ENCODE measurements at regions of chr2 and their contacts with region 1.

Region 1: GRCh38 chr2:17719562-17720371 is 33.8 kb downstream of the SMC6 start:
- DNase-seq: no peak
- ATAC-seq: peak; percentile 59
- H3K4me3 ChIP-seq: no peak overlapping the region
- H3K27ac ChIP-seq: no peak overlapping the region
- H3K4me1 ChIP-seq: no peaks in the 10 kb centered on the region
- H3K27me3 ChIP-seq: no peaks in the 10 kb centered on the region
- CTCF ChIP-seq: peak; percentile 65
- EP300 ChIP-seq: no peak
- POLR2A ChIP-seq: no peak
- RAD21 ChIP-seq: no peak

Region 2: GRCh38 chr2:17753803-17754663 is 34.3 kb after region 1 on chr2 and contains the starts of genes GEN1 and SMC6:
- CTCF ChIA-PET with region 1: no interaction called
- POLR2A ChIA-PET with region 1: interaction called, 3 read pairs
- in situ Hi-C with region 1: no loop called
- intact Hi-C with region 1: loop called (anchors 2 kb)
- DNase-seq: peak; percentile 92
- ATAC-seq: peak; percentile 88
- H3K4me3 ChIP-seq: peak within 1 kb of the TSS; percentile 82 to 95 (median 93)
- H3K27ac ChIP-seq: peak within 1 kb of the TSS; percentile 99
- H3K4me1 ChIP-seq: peaks cover 54% of the 10 kb centered on the region
- H3K27me3 ChIP-seq: no peaks in the 10 kb centered on the region; a peak in 1 of 5 replicates
- CTCF ChIP-seq: no peak
- EP300 ChIP-seq: peak in 1 of 2 experiments; percentile 16; a peak in 1 of 4 replicates
- POLR2A ChIP-seq: peak; percentile 15 to 45; a peak in 3 of 4 replicates
- RAD21 ChIP-seq: peak; percentile 30
- total RNA-seq, gene GEN1: 26.6 and 27.1 TPM in 2 replicates
- total RNA-seq, gene SMC6: 55.3 and 69.4 TPM in 2 replicates

Measured in HepG2 (cell line).